OCI-LY7 (cell line): ENCODE measurements at regions of chr6 and their contacts with region 1.

Region 1: GRCh38 chr6:138103871-138104270 is 3.3 kb downstream of the PERP start:
- DNase-seq: no peak
- H3K4me3 ChIP-seq: no peak overlapping the region
- H3K27ac ChIP-seq: no peak overlapping the region
- H3K4me1 ChIP-seq: no peaks in the 10 kb centered on the region
- CTCF ChIP-seq: no peak

Region 2: GRCh38 chr6:138082232-138082631 is 21.6 kb before region 1 on chr6:
- CTCF ChIA-PET with region 1: no interaction called
- POLR2A ChIA-PET with region 1: no interaction called
- intact Hi-C with region 1: loop called (anchors 1 kb)
- DNase-seq: no peak
- H3K4me3 ChIP-seq: no peak overlapping the region
- H3K27ac ChIP-seq: no peak overlapping the region
- H3K4me1 ChIP-seq: no peaks in the 10 kb centered on the region
- CTCF ChIP-seq: no peak